ENCODE measurements at regions of chr1 and their contacts with region 1.

Region 1: GRCh38 chr1:77143529-77144121 is 75.6 kb downstream of the PIGK start:
- DNase-seq: no peak
- H3K4me3 Mint-ChIP-seq: no peak overlapping the region
- H3K27ac Mint-ChIP-seq: no peak overlapping the region
- H3K4me1 Mint-ChIP-seq: no peaks in the 10 kb centered on the region
- H3K27me3 Mint-ChIP-seq: no peaks in the 10 kb centered on the region

Region 2: GRCh38 chr1:76330991-76331603 is 812.5 kb before region 1 on chr1:
- intact Hi-C with region 1: loop called (anchors 5 kb)
- DNase-seq: peak; percentile 79
- H3K4me3 Mint-ChIP-seq: no peak overlapping the region
- H3K27ac Mint-ChIP-seq: no peak overlapping the region
- H3K4me1 Mint-ChIP-seq: peaks cover 6% of the 10 kb centered on the region
- H3K27me3 Mint-ChIP-seq: peaks cover 4% of the 10 kb centered on the region

Region 3: GRCh38 chr1:77533660-77534305 is 390.2 kb after region 1 on chr1:
- intact Hi-C with region 1: loop called (anchors 1 kb)
- DNase-seq: peak; percentile 84
- H3K4me3 Mint-ChIP-seq: no peak overlapping the region
- H3K27ac Mint-ChIP-seq: no peak overlapping the region
- H3K4me1 Mint-ChIP-seq: no peaks in the 10 kb centered on the region
- H3K27me3 Mint-ChIP-seq: no peaks in the 10 kb centered on the region

Measured in activated CD4-positive, alpha-beta T cell treated with anti-CD3 and anti-CD28 coated beads, Interleukin-2, amount 10 ng/mL, durations not matched to agents 24 days and 14 days (primary cell).